ENCODE measurements at regions of chr7 and their contacts with region 1.

Region 1: GRCh38 chr7:91852263-91852741 is 28.2 kb downstream of the MTERF1 start:
- DNase-seq: peak in 1 of 2 experiments; percentile 12
- H3K4me3 ChIP-seq: no peak overlapping the region
- H3K4me3 Mint-ChIP-seq: no peak overlapping the region
- H3K27ac Mint-ChIP-seq: no peak overlapping the region
- H3K4me1 ChIP-seq: no peaks in the 10 kb centered on the region
- H3K4me1 Mint-ChIP-seq: peaks cover 6% of the 10 kb centered on the region
- H3K27me3 ChIP-seq: no peaks in the 10 kb centered on the region
- H3K27me3 Mint-ChIP-seq: no peaks in the 10 kb centered on the region
- CTCF ChIP-seq: peak in 1 of 2 experiments; percentile 5

Region 2: DNA sequence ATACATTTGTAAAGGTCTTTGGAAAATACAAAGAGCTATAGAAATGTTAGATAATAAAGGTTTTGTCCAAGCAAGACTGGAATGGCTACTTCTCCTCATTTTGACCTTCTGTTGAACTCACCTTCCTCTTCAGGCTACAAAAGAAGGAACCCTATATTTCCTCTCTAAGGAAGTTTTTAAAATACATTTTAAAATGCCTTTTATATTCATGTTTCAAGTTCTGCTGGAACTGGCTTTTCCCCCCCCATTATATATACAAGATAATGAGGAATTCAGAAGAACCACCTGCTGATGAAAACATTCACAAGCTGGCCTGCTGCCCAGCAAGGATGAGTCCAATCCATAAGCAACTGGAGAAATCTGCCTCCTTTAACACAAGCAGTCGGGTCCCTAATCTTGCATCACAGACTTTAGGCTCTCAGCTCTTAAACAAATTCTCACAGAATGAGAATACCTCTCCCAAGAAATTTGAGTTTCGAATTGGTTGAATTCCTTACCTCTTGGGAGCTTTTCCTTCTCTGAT is 16.4 kb before region 1 on chr7:
- CTCF ChIA-PET with region 1: no interaction called
- POLR2A ChIA-PET with region 1: no interaction called
- intact Hi-C with region 1: loop called (anchors 2 kb)
- DNase-seq: no peak
- H3K4me3 ChIP-seq: no peak overlapping the region
- H3K4me3 Mint-ChIP-seq: no peak overlapping the region
- H3K27ac Mint-ChIP-seq: no peak overlapping the region
- H3K4me1 ChIP-seq: no peaks in the 10 kb centered on the region
- H3K4me1 Mint-ChIP-seq: no peaks in the 10 kb centered on the region
- H3K27me3 ChIP-seq: no peaks in the 10 kb centered on the region
- H3K27me3 Mint-ChIP-seq: peaks cover 6% of the 10 kb centered on the region
- CTCF ChIP-seq: no peak

Measured in Caco-2 (cell line).